CD8-positive, alpha-beta memory T cell (primary cell): ENCODE measurements at regions of chr7 and their contacts with region 1.

Region 1: GRCh38 chr7:121366852-121367431 is 29.2 kb downstream of the FAM3C start:
- DNase-seq: peak in 3 of 5 donors; percentile 8 to 47 (median 43)
- H3K4me3 ChIP-seq: no peak overlapping the region
- H3K4me3 Mint-ChIP-seq: no peak overlapping the region
- H3K27ac ChIP-seq: no peak overlapping the region
- H3K27ac Mint-ChIP-seq: no peak overlapping the region
- H3K4me1 ChIP-seq: no peaks in the 10 kb centered on the region
- H3K4me1 Mint-ChIP-seq: peaks cover 20 to 43% (median 34%) of the 10 kb centered on the region in 3 donors
- H3K27me3 ChIP-seq: no peaks in the 10 kb centered on the region
- H3K27me3 Mint-ChIP-seq: no peaks in the 10 kb centered on the region

Region 2: DNA sequence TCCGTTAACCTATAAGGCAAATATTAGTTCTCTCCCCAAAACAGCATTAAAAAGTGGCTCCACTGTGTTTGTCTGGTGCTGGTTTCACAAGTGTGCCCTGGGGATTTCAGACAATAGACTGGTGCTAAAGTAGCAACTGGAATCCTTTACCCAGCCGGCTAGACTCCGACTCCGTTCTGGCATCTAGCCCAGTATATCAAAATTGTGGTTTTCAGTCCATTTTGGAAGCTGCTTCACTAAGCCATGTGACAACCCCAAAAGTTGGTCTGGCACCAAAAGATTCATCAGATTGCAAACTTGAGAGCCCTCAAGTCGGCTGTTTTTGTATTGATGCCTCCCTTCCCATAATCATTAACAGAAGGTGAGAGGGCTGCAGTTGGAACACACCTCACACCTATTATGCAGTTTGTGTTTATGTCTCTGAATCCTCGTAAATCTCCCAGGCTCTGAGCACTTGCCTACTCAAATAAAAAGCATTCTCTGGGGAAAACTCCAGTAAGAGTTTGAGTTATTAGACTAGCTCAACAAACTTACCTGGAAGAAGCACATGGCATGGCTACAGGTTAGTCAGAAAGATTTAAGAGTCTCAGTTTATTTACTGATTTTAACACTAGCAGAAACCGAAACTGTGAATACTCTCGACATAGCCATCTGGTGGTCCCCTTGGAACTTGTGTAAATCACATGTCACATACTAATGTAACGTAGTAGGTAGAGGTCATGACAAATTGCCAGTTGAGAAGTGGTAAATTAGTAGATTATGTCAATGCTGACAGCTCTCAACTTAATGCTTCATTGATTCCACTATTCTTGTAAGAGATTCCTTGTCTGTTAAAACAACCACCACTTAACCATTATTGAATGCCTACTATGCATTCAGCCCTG is 52.9 kb before region 1 on chr7:
- CTCF ChIA-PET with region 1: no interaction called
- POLR2A ChIA-PET with region 1: no interaction called
- DNase-seq: no peak
- H3K4me3 ChIP-seq: no peak overlapping the region
- H3K4me3 Mint-ChIP-seq: peak overlapping the region in 2 of 7 donors; percentile 3 to 33
- H3K27ac ChIP-seq: no peak overlapping the region
- H3K27ac Mint-ChIP-seq: no peak overlapping the region
- H3K4me1 ChIP-seq: no peaks in the 10 kb centered on the region
- H3K4me1 Mint-ChIP-seq: peaks cover 0 to 8% (median 0%) of the 10 kb centered on the region in 3 donors
- H3K27me3 ChIP-seq: no peaks in the 10 kb centered on the region
- H3K27me3 Mint-ChIP-seq: peaks cover 4 to 5% of the 10 kb centered on the region in 2 donors

Region 3: GRCh38 chr7:121440857-121441503 is 74.0 kb after region 1 on chr7:
- CTCF ChIA-PET with region 1: interaction called, 13 read pairs
- POLR2A ChIA-PET with region 1: interaction called, 3 read pairs
- DNase-seq: no peak
- H3K4me3 ChIP-seq: no peak overlapping the region
- H3K4me3 Mint-ChIP-seq: peak overlapping the region; percentile 62 to 81 (median 73)
- H3K27ac ChIP-seq: no peak overlapping the region
- H3K27ac Mint-ChIP-seq: peak overlapping the region; percentile 36 to 99 (median 86)
- H3K4me1 ChIP-seq: peaks cover 22% of the 10 kb centered on the region
- H3K4me1 Mint-ChIP-seq: peaks cover 39 to 55% (median 51%) of the 10 kb centered on the region in 3 donors
- H3K27me3 ChIP-seq: no peaks in the 10 kb centered on the region
- H3K27me3 Mint-ChIP-seq: no peaks in the 10 kb centered on the region

Region 4: DNA sequence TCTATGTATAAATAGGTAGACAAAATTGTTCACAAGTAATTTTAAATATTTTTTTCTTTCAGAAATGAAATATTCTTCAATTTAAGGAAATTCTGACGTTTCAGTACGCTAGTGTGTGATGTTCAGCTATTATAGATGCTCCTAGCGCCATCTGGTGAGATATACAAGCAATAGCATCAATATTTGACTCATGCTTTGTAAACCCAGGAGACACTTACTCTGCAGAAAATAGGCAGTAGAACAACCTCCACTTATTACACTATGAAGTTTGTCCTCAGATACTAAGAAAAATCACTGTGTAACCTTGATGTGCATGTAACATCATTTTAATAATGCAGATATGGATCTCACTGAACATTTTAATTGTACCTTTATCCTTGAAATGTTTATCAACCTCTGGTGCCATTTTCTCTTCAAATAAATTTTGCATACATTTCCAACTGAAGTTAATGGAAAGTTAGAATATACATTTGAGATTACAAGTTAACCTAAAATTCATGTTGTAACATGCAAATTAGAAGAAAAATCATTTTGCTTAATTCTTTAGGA is 180.7 kb after region 1 on chr7:
- CTCF ChIA-PET with region 1: interaction called, 32 read pairs
- POLR2A ChIA-PET with region 1: interaction called, 4 read pairs
- DNase-seq: peak in 2 of 5 donors; percentile 36 to 40
- H3K4me3 ChIP-seq: no peak overlapping the region
- H3K4me3 Mint-ChIP-seq: no peak overlapping the region
- H3K27ac ChIP-seq: no peak overlapping the region
- H3K27ac Mint-ChIP-seq: no peak overlapping the region
- H3K4me1 ChIP-seq: no peaks in the 10 kb centered on the region
- H3K4me1 Mint-ChIP-seq: peaks cover 10 to 26% (median 13%) of the 10 kb centered on the region in 3 donors
- H3K27me3 ChIP-seq: no peaks in the 10 kb centered on the region
- H3K27me3 Mint-ChIP-seq: peaks cover 2 to 3% of the 10 kb centered on the region in 2 donors